ENCODE measurements at regions of chr20 and their contacts with region 1.

Region 1: DNA sequence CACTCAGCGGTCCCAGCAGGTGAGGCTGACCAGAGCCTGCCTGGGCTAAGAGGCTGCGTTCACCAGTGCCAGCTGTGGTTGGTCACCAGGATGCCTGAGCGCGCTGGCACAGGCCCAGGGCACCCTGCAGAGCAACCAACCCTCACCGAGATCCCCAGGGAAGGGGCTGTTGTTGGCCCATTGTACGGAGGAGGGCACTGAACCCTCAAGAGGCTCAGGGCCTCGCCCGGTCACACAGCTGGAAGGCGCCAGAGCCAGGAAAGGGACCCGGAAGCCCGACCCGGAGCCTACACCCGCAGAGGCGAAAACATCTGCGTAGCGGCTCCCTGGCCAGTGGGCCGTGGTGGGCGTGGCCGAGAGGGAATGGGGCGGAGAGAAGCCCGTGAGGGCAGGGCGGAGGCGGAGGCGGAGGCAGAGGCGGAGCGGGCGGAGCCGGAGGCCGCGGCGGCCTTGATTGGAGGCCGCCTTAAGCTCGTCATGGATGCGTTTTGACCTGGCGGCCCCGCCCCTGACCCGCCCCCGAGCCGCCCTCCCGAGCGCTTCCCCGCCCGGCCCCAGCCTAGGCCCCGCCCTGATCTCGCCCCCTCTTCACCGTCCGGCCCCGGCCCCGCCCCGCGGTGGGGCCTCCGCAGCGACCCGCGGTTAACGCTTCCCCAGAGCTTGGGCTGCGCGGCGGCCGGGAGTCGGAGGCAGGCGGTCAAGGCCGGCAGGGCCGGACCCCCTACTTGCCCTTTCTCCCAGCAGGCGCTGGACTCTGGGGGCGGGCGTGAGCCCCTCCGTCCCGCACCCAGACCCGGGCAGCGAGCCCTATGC is 2.2 kb upstream of the MRGBP start:
- DNase-seq: peak; percentile 90 to 94 (median 93)
- H3K4me3 ChIP-seq: peak overlapping the region; percentile 78 to 82
- H3K4me3 Mint-ChIP-seq: peak overlapping the region; percentile 76 to 90 (median 86)
- H3K27ac ChIP-seq: peak overlapping the region; percentile 83
- H3K27ac Mint-ChIP-seq: peak overlapping the region; percentile 94 to 98 (median 96)
- H3K4me1 ChIP-seq: peaks cover 32% of the 10 kb centered on the region
- H3K4me1 Mint-ChIP-seq: peaks cover 10 to 59% (median 28%) of the 10 kb centered on the region in 4 donors
- H3K27me3 ChIP-seq: no peaks in the 10 kb centered on the region
- H3K27me3 Mint-ChIP-seq: no peaks in the 10 kb centered on the region

Region 2: DNA sequence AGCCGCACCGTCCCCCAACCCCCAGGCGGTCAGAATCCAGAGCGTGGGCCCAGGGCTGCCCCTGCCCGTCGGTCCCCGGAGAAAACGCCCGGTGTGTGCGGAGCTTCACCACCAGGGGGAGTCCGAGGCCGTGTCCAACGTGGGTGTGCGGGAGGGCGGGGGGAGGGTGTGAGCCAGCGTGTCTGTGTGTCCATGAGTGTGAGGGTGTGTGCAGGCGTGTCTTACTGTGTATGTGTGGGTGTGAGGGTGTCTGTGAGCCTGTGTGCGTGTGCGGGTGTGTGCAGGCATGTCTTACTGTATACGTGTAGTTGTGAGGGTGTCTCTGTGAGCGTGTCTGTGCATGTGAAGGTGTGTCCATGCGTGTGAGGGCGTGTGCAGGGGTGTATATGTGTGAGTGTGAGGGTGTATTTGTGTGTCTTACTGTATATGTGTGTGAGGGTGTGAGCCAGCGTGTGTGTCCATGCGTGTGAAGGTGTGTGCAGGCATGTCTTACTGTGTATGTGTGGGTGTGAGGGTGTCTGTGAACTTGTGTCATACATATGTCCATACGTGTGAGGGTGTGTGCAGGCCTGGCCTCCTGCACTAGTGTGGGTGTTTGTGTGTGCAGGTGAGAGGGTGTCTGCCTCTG is 293.8 kb before region 1 on chr20:
- CTCF ChIA-PET with region 1: interaction called, 17 read pairs
- POLR2A ChIA-PET with region 1: interaction called, 6 read pairs
- intact Hi-C with region 1: loop called (anchors 1 kb)
- DNase-seq: peak; percentile 64 to 78 (median 66)
- H3K4me3 ChIP-seq: no peak overlapping the region
- H3K4me3 Mint-ChIP-seq: peak overlapping the region in 1 of 8 donors; percentile 48
- H3K27ac ChIP-seq: no peak overlapping the region
- H3K27ac Mint-ChIP-seq: peak overlapping the region in 4 of 7 donors; percentile 59 to 89 (median 61)
- H3K4me1 ChIP-seq: peaks cover 14% of the 10 kb centered on the region
- H3K4me1 Mint-ChIP-seq: peaks cover 11 to 23% (median 17%) of the 10 kb centered on the region in 4 donors
- H3K27me3 ChIP-seq: no peaks in the 10 kb centered on the region
- H3K27me3 Mint-ChIP-seq: peaks cover 0 to 2% of the 10 kb centered on the region in 2 donors

Region 3: DNA sequence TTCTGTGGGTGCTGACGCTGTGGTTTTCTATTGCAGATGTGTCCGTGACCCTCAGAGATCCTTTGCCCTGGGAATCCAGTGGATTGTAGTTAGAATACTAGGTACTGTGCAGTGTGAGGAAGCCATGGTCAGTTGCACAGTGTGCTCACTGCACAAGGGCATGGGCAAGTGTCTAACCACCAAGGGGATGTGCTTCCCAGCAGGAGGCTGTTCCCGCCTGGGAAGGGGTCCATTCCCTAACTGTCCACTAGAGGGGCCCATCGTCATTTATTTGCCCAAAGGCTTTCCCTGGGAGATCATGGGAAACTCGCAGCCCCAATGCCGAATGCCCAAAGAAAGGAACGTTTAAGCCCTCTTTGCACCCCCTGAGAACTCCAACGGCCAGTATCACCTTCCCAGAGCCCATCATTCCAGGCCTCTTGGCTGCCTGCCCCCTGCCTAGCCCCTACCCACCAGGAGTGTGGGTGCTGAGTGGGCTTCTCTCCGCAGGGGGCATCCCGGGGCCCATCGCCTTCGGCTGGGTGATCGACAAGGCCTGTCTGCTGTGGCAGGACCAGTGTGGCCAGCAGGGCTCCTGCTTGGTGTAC is 125.6 kb before region 1 on chr20:
- CTCF ChIA-PET with region 1: interaction called, 9 read pairs
- POLR2A ChIA-PET with region 1: interaction called, 6 read pairs
- intact Hi-C with region 1: loop called (anchors 1 kb)
- DNase-seq: peak in 4 of 5 donors; percentile 21 to 40 (median 38)
- H3K4me3 ChIP-seq: no peak overlapping the region
- H3K4me3 Mint-ChIP-seq: no peak overlapping the region
- H3K27ac ChIP-seq: no peak overlapping the region
- H3K27ac Mint-ChIP-seq: no peak overlapping the region
- H3K4me1 ChIP-seq: no peaks in the 10 kb centered on the region
- H3K4me1 Mint-ChIP-seq: peaks cover 0 to 3% (median 0%) of the 10 kb centered on the region in 4 donors
- H3K27me3 ChIP-seq: no peaks in the 10 kb centered on the region
- H3K27me3 Mint-ChIP-seq: no peaks in the 10 kb centered on the region

Region 4: GRCh38 chr20:62678553-62678952 is 115.6 kb before region 1 on chr20:
- CTCF ChIA-PET with region 1: no interaction called
- POLR2A ChIA-PET with region 1: no interaction called
- intact Hi-C with region 1: no loop called
- DNase-seq: no peak
- H3K4me3 ChIP-seq: no peak overlapping the region
- H3K4me3 Mint-ChIP-seq: no peak overlapping the region
- H3K27ac ChIP-seq: no peak overlapping the region
- H3K27ac Mint-ChIP-seq: peak overlapping the region in 3 of 7 donors; percentile 5 to 78 (median 21)
- H3K4me1 ChIP-seq: no peaks in the 10 kb centered on the region
- H3K4me1 Mint-ChIP-seq: peaks cover 0 to 18% (median 4%) of the 10 kb centered on the region in 4 donors
- H3K27me3 ChIP-seq: no peaks in the 10 kb centered on the region
- H3K27me3 Mint-ChIP-seq: no peaks in the 10 kb centered on the region

Region 5: DNA sequence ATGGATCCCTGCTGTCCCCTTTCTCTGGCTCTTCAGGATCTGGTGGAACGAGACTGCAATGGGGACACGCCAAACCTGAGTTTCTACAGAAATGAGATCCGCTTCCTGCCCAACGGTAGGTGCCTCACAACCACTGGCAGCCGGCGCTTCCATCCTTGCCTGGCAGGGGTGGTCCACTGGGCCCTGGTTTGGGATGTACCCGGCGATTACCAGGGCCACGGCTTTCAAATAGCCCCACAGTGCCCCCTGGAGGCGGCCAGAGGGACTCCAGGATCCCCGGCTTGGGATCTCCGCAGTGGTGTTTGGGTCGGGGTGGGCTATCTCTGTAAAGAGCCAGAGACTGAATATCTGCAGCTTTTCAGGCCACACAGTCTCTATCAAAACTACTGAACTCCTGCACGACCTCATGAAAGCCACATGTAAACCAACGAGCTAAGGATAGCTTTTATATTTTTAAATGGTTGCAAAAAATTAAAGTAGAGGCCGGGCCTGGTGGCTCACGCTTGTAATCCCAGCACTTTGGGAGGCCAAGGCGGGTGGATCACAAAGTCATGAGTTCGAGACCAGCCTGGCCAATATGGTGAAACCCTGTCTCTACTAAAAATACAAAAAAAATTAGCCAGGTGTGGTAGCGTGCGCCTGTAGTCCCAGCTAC is 14.2 kb after region 1 on chr20:
- CTCF ChIA-PET with region 1: interaction called, 23 read pairs
- POLR2A ChIA-PET with region 1: interaction called, 75 read pairs
- intact Hi-C with region 1: loop called (anchors 1 kb)
- DNase-seq: peak; percentile 67 to 77 (median 68)
- H3K4me3 ChIP-seq: no peak overlapping the region
- H3K4me3 Mint-ChIP-seq: peak overlapping the region in 6 of 8 donors; percentile 36 to 86 (median 56)
- H3K27ac ChIP-seq: no peak overlapping the region
- H3K27ac Mint-ChIP-seq: peak overlapping the region in 6 of 7 donors; percentile 41 to 84 (median 78)
- H3K4me1 ChIP-seq: peaks cover 38% of the 10 kb centered on the region
- H3K4me1 Mint-ChIP-seq: peaks cover 8 to 41% (median 22%) of the 10 kb centered on the region in 4 donors
- H3K27me3 ChIP-seq: no peaks in the 10 kb centered on the region
- H3K27me3 Mint-ChIP-seq: peaks cover 0 to 1% of the 10 kb centered on the region in 2 donors

Region 6: GRCh38 chr20:62937366-62938104 is 143.4 kb after region 1 on chr20:
- CTCF ChIA-PET with region 1: no interaction called
- POLR2A ChIA-PET with region 1: interaction called, 10 read pairs
- intact Hi-C with region 1: no loop called
- DNase-seq: peak; percentile 96 to 98 (median 97)
- H3K4me3 ChIP-seq: peak overlapping the region; percentile 84 to 89
- H3K4me3 Mint-ChIP-seq: peak overlapping the region in 7 of 8 donors; percentile 91 to 99 (median 95)
- H3K27ac ChIP-seq: peak overlapping the region; percentile 86
- H3K27ac Mint-ChIP-seq: peak overlapping the region; percentile 92 to 98 (median 96)
- H3K4me1 ChIP-seq: peaks cover 71% of the 10 kb centered on the region
- H3K4me1 Mint-ChIP-seq: peaks cover 26 to 46% (median 37%) of the 10 kb centered on the region in 4 donors
- H3K27me3 ChIP-seq: no peaks in the 10 kb centered on the region
- H3K27me3 Mint-ChIP-seq: no peaks in the 10 kb centered on the region

Measured in CD4-positive, alpha-beta memory T cell (primary cell).